MCF 10A (cell line): ENCODE measurements at regions of chr15 and their contacts with region 1.

Region 1: GRCh38 chr15:74781431-74782258 is at the start of gene CSK:
- DNase-seq: peak; percentile 68
- H3K4me3 Mint-ChIP-seq: peak within 1 kb of the TSS; percentile 92
- H3K27ac Mint-ChIP-seq: peak within 1 kb of the TSS; percentile 85
- H3K4me1 Mint-ChIP-seq: peaks cover 23% of the 10 kb centered on the region
- H3K27me3 Mint-ChIP-seq: no peaks in the 10 kb centered on the region
- CTCF ChIP-seq: peak; percentile 58
- total RNA-seq, gene CSK: 50.4 and 65.3 TPM in 2 replicates

Region 2: DNA sequence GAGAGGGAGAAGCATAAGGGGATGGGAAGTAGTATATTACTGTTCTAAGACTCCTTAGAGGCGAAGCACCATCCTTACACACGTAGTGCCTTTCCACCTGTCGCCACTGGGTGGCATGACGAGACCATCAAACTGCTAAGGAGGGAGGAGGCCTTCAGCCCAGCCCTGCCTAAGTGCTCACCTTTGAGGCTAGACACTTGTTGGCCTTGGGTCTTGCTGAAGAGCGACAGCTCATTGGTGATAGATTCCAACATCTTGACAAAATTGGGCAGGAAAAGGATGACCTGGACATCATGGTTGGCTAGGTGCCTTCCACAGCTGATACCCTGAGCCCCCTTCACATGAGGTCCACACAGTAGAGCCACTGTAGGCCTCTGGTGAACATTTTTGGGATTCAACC is 146.4 kb before region 1 on chr15:
- CTCF ChIA-PET with region 1: interaction called, 632 read pairs
- POLR2A ChIA-PET with region 1: interaction called, 5 read pairs
- intact Hi-C with region 1: no loop called
- DNase-seq: peak; percentile 81
- H3K4me3 Mint-ChIP-seq: no peak overlapping the region
- H3K27ac Mint-ChIP-seq: no peak overlapping the region
- H3K4me1 Mint-ChIP-seq: no peaks in the 10 kb centered on the region
- H3K27me3 Mint-ChIP-seq: no peaks in the 10 kb centered on the region
- CTCF ChIP-seq: peak; percentile 89

Region 3: GRCh38 chr15:74723754-74724334 is 57.8 kb before region 1 on chr15:
- CTCF ChIA-PET with region 1: no interaction called
- POLR2A ChIA-PET with region 1: no interaction called
- intact Hi-C with region 1: no loop called
- DNase-seq: peak; percentile 74
- H3K4me3 Mint-ChIP-seq: no peak overlapping the region
- H3K27ac Mint-ChIP-seq: no peak overlapping the region
- H3K4me1 Mint-ChIP-seq: no peaks in the 10 kb centered on the region
- H3K27me3 Mint-ChIP-seq: no peaks in the 10 kb centered on the region
- CTCF ChIP-seq: no peak

Region 4: GRCh38 chr15:74793135-74794028 is 11.7 kb after region 1 on chr15:
- CTCF ChIA-PET with region 1: interaction called, 20 read pairs
- POLR2A ChIA-PET with region 1: interaction called, 10 read pairs
- intact Hi-C with region 1: no loop called
- DNase-seq: peak; percentile 43
- H3K4me3 Mint-ChIP-seq: no peak overlapping the region
- H3K27ac Mint-ChIP-seq: no peak overlapping the region
- H3K4me1 Mint-ChIP-seq: peaks cover 41% of the 10 kb centered on the region
- H3K27me3 Mint-ChIP-seq: no peaks in the 10 kb centered on the region
- CTCF ChIP-seq: no peak

Region 5: DNA sequence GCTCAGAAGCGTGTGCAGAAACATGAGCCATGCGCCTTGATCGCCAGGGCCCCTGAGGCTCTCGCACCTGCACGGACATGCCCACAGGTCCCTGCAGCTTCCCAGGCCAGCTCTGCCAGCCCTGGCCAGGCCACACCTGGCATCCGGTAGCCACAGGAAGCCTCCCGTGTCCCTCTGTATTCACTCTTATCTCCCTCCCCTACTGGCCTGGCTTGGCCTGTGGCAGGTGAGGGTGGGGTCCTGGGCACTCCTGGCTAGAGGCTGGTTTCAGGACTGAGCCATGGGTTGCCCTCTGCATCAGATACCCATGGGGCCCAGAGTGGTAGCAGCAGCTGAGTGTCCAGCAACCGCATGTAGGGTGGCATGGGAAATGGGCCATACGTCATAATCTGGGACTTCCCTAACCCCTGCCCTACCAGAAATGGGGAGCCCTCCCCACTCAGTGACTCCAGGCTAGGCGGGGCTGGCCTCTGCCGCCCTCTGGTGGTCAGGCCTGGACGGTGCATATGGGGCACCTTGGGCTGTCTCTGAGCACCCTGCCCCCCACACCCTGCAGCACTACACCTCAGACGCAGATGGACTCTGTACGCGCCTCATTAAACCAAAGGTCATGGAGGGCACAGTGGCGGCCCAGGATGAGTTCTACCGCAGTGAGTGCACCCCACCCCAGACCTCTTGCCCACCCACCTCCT is 18.4 kb after region 1 on chr15:
- CTCF ChIA-PET with region 1: interaction called, 32 read pairs
- POLR2A ChIA-PET with region 1: interaction called, 33 read pairs
- intact Hi-C with region 1: no loop called
- DNase-seq: peak; percentile 90
- H3K4me3 Mint-ChIP-seq: no peak overlapping the region
- H3K27ac Mint-ChIP-seq: peak overlapping the region; percentile 83
- H3K4me1 Mint-ChIP-seq: peaks cover 13% of the 10 kb centered on the region
- H3K27me3 Mint-ChIP-seq: no peaks in the 10 kb centered on the region
- CTCF ChIP-seq: peak; percentile 97

Region 6: DNA sequence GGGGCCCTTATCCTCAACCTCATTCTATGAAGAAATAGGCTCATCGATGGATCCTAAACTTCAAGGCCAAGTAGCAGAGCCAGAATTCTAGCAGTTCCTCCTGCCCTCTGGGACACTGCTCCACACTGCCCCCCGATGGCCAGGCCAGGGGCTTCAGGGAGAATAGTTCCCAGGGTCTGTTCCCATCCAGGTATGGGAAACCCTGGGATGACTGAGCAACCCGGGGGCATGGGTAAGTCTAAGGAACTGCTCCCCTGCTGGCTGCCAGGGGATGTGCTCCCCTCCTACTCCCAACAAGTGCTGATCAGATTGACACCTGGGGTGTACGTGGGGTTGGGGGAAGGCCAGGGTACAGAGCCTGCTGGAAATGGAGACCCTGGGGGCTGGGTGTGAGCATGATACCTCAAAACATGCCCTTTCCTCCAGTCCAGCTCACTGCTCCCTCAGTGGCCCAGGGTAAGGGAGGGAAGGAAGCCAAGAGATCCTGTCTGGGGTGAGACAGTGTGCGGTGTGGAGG is 53.7 kb after region 1 on chr15:
- CTCF ChIA-PET with region 1: interaction called, 3 read pairs
- POLR2A ChIA-PET with region 1: no interaction called
- intact Hi-C with region 1: loop called (anchors 1 kb)
- DNase-seq: peak; percentile 83
- H3K4me3 Mint-ChIP-seq: no peak overlapping the region
- H3K27ac Mint-ChIP-seq: no peak overlapping the region
- H3K4me1 Mint-ChIP-seq: peaks cover 6% of the 10 kb centered on the region
- H3K27me3 Mint-ChIP-seq: no peaks in the 10 kb centered on the region
- CTCF ChIP-seq: peak; percentile 69

Region 7: GRCh38 chr15:74950078-74951000 is 168.7 kb after region 1 on chr15:
- CTCF ChIA-PET with region 1: interaction called, 11 read pairs
- POLR2A ChIA-PET with region 1: interaction called, 3 read pairs
- intact Hi-C with region 1: no loop called
- DNase-seq: peak; percentile 80
- H3K4me3 Mint-ChIP-seq: no peak overlapping the region
- H3K27ac Mint-ChIP-seq: no peak overlapping the region
- H3K4me1 Mint-ChIP-seq: peaks cover 7% of the 10 kb centered on the region
- H3K27me3 Mint-ChIP-seq: no peaks in the 10 kb centered on the region
- CTCF ChIP-seq: peak; percentile 97